Kidney (tissue), 22 donors: ENCODE measurements at regions of chr7 and their contacts with region 1.

Region 1: GRCh38 chr7:88357781-88358525 is 51.3 kb upstream of the STEAP4 start:
- DNase-seq: no peak
- H3K4me3 ChIP-seq: peak overlapping the region in 1 of 3 donors; percentile 24
- H3K27ac ChIP-seq: no peak overlapping the region
- H3K4me1 ChIP-seq: no peaks in the 10 kb centered on the region
- H3K27me3 ChIP-seq: no peaks in the 10 kb centered on the region
- CTCF ChIP-seq: peak; percentile 25

Region 2: GRCh38 chr7:88243345-88243909 is 114.5 kb before region 1 on chr7:
- intact Hi-C with region 1: loop called (anchors 10 kb)
- DNase-seq: peak in 3 of 5 donors; percentile 40 to 78 (median 77)
- H3K4me3 ChIP-seq: no peak overlapping the region
- H3K27ac ChIP-seq: no peak overlapping the region
- H3K4me1 ChIP-seq: no peaks in the 10 kb centered on the region
- H3K27me3 ChIP-seq: no peaks in the 10 kb centered on the region
- CTCF ChIP-seq: peak; percentile 64

Region 3: DNA sequence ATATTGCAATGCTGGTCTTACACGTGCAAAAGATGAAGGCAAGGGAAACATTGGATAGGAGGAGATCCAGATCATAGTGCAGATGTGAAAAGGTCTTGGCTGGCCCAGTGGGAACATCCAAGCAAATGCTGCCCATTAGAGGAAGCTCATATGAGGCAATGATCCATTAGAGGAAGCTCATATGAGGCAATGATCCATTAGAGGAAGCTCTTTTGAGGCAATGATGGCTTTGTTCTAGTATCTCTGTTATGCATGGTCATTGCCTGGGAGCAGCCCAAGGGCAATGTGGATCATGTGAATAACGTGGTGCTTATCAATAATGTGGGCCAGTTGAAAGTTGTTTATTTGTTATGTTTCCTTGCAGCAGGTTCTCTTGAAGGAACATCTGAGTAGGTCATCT is 89.1 kb before region 1 on chr7:
- intact Hi-C with region 1: no loop called
- DNase-seq: no peak
- H3K4me3 ChIP-seq: no peak overlapping the region
- H3K27ac ChIP-seq: no peak overlapping the region
- H3K4me1 ChIP-seq: no peaks in the 10 kb centered on the region
- H3K27me3 ChIP-seq: no peaks in the 10 kb centered on the region
- CTCF ChIP-seq: no peak